ENCODE measurements at regions of chr19 and their contacts with region 1.

Region 1: GRCh38 chr19:44869733-44870470 is 21.2 kb upstream of the TOMM40 start:
- DNase-seq: no peak
- H3K4me3 ChIP-seq: no peak overlapping the region
- H3K27ac ChIP-seq: no peak overlapping the region
- H3K4me1 ChIP-seq: no peaks in the 10 kb centered on the region
- H3K27me3 ChIP-seq: no peaks in the 10 kb centered on the region
- CTCF ChIP-seq: no peak
- EP300 ChIP-seq: no peak
- POLR2A ChIP-seq: no peak
- RAD21 ChIP-seq: no peak

Region 2: DNA sequence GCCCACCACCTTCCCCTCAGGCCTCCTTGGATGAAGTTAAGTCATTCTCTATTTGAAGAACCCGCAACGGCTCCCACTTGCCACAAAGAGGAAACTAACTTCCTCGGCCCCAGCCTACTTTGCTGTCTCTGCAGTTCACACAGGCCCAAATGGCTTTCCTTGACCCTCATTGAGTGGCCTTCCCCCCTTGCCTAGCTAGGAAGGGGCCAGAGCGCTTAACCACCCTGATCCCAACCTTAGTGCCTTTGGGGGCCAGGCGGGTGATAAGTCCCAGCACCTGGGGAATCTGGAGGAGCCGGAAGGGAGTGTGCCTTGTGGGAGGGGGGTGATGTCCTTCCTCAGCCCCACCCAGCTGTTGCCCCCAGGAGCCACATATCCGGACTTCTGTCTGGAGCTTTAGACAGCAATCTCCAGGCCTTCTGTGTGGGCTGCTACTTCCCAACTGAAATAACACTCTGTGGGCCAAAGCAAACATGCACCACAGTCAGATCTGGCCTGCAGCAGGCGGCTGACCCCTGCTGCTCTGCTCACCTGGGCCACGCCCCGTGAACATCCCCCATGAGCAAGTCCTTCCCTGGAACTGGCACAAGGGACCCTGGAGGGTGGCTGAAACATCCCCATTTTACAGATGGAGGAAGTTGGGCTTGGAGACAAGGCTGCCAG is 13.3 kb before region 1 on chr19:
- CTCF ChIA-PET with region 1: interaction called, 5 read pairs
- POLR2A ChIA-PET with region 1: interaction called, 15 read pairs
- DNase-seq: no peak
- H3K4me3 ChIP-seq: no peak overlapping the region
- H3K27ac ChIP-seq: no peak overlapping the region
- H3K4me1 ChIP-seq: peaks cover 0 to 2% (median 0%) of the 10 kb centered on the region in 4 experiments; a peak in 1 of 7 replicates
- H3K27me3 ChIP-seq: no peaks in the 10 kb centered on the region
- CTCF ChIP-seq: no peak
- EP300 ChIP-seq: no peak
- POLR2A ChIP-seq: 0 out of 3 replicates have a peak, but pooled peaks of 1 of the 2 experiments have one; percentile 23
- RAD21 ChIP-seq: no peak

Region 3: GRCh38 chr19:44883922-44884321 is 14.0 kb after region 1 on chr19:
- CTCF ChIA-PET with region 1: interaction called, 3 read pairs
- POLR2A ChIA-PET with region 1: interaction called, 23 read pairs
- DNase-seq: no peak
- H3K4me3 ChIP-seq: no peak overlapping the region
- H3K27ac ChIP-seq: no peak overlapping the region
- H3K4me1 ChIP-seq: peaks cover 0 to 11% (median 1%) of the 10 kb centered on the region in 4 experiments; a peak in 3 of 7 replicates
- H3K27me3 ChIP-seq: no peaks in the 10 kb centered on the region
- CTCF ChIP-seq: no peak
- EP300 ChIP-seq: no peak
- POLR2A ChIP-seq: no peak
- RAD21 ChIP-seq: no peak

Measured in H1 (cell line).